Upper lobe of right lung (tissue), 1 donor: ENCODE measurements at regions of chr6 and their contacts with region 1.

Region 1: GRCh38 chr6:117449549-117450439 is 24.1 kb upstream of the ROS1 start:
- DNase-seq: no peak
- ATAC-seq: peak; percentile 54
- H3K4me3 ChIP-seq: no peak overlapping the region
- H3K27ac ChIP-seq: no peak overlapping the region
- H3K4me1 ChIP-seq: peaks cover 11% of the 10 kb centered on the region
- H3K27me3 ChIP-seq: no peaks in the 10 kb centered on the region
- CTCF ChIP-seq: peak; percentile 77

Region 2: DNA sequence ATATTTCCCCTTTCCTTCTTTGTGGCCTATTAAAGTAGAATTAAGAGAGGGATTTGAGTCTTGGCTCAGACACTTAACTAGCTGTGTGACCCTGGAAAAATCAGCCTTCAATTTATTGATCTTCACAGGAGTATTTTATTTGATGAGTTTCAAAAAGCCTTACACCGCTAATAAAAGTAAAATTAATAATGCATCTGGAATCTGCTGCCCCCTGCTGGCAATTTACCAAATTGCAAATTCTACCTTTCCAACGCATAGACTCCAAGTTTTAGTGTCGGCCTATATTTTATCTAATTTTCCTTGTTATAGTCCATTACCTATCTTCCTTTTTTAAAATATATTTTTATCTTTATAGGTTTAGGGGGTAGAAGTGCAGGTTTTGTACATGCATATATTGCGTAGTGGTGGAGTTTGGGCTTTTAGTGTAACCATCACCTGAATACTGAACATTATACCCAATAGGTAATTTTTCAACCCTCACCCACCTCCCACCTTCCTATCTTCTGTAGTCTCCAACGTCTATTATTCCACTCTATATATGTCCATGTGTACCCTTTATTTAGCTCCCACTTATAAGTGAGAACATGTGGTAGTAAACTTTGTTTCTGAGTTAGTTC is 106.2 kb after region 1 on chr6:
- intact Hi-C with region 1: loop called (anchors 10 kb)
- DNase-seq: no peak
- ATAC-seq: peak; percentile 59
- H3K4me3 ChIP-seq: no peak overlapping the region
- H3K27ac ChIP-seq: no peak overlapping the region
- H3K4me1 ChIP-seq: no peaks in the 10 kb centered on the region
- H3K27me3 ChIP-seq: no peaks in the 10 kb centered on the region
- CTCF ChIP-seq: peak; percentile 89